ENCODE measurements at regions of chr7 and their contacts with region 1.

Region 1: DNA sequence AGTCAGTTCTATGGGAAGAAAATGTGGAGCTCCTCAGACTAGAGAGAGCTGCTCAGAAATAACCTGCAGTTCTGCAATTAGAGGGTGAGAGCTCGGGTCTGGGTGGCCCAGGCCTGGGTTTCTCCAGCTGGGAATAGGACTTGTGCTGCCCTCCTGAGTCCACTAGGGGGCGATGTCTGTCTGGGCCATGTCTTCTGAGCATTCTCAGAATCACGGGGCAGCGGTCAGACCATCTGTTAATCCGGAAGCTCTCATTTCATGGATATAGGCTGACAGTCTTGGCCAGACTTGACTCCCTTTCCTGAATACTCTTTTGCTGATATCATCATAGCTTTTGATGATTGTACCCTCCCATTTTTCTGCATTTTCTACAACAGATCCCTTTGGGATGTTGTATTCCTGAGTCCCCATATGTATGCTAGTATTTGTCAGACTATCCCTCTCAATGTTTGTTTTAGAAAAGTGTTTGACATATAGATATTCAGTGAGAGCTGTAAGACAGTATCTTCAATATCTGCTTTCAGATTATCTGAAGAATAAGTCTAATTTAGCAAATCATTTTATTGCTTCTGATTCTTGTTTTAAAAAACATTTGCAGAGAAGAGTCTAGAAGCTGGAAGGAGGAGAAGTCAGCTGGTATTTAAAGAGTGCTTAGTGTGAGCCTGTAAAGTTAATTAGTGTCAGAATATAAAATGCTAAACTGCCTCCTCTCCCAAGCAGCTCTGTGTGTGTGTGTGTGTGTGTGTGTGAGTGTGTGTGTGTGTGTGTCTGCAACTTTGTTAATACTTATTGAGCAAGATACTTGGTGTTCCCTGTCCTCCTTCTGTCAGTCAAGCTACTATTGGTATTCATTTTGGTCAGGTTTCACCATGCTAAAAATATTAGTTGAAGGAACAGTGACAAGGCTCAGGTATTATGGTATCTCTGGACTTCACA is 38.0 kb downstream of the STARD3NL start:
- DNase-seq: peak; percentile 59 to 90 (median 64)
- ATAC-seq: peak; percentile 92
- H3K4me3 ChIP-seq: no peak overlapping the region
- H3K4me3 Mint-ChIP-seq: no peak overlapping the region
- H3K27ac ChIP-seq: peak overlapping the region in 1 of 2 donors; percentile 42
- H3K27ac Mint-ChIP-seq: peak overlapping the region; percentile 54
- H3K4me1 ChIP-seq: peaks cover 30% of the 10 kb centered on the region
- H3K4me1 Mint-ChIP-seq: peaks cover 25% of the 10 kb centered on the region
- H3K27me3 ChIP-seq: no peaks in the 10 kb centered on the region
- H3K27me3 Mint-ChIP-seq: no peaks in the 10 kb centered on the region
- CTCF ChIP-seq: peak; percentile 95

Region 2: GRCh38 chr7:38186593-38187314 is 29.2 kb before region 1 on chr7:
- CTCF ChIA-PET with region 1: interaction called, 13 read pairs
- POLR2A ChIA-PET with region 1: no interaction called
- intact Hi-C with region 1: no loop called
- DNase-seq: no peak
- ATAC-seq: no peak
- H3K4me3 ChIP-seq: no peak overlapping the region
- H3K4me3 Mint-ChIP-seq: no peak overlapping the region
- H3K27ac ChIP-seq: no peak overlapping the region
- H3K27ac Mint-ChIP-seq: no peak overlapping the region
- H3K4me1 ChIP-seq: no peaks in the 10 kb centered on the region
- H3K4me1 Mint-ChIP-seq: peaks cover 22% of the 10 kb centered on the region
- H3K27me3 ChIP-seq: no peaks in the 10 kb centered on the region
- H3K27me3 Mint-ChIP-seq: no peaks in the 10 kb centered on the region
- CTCF ChIP-seq: no peak

Region 3: DNA sequence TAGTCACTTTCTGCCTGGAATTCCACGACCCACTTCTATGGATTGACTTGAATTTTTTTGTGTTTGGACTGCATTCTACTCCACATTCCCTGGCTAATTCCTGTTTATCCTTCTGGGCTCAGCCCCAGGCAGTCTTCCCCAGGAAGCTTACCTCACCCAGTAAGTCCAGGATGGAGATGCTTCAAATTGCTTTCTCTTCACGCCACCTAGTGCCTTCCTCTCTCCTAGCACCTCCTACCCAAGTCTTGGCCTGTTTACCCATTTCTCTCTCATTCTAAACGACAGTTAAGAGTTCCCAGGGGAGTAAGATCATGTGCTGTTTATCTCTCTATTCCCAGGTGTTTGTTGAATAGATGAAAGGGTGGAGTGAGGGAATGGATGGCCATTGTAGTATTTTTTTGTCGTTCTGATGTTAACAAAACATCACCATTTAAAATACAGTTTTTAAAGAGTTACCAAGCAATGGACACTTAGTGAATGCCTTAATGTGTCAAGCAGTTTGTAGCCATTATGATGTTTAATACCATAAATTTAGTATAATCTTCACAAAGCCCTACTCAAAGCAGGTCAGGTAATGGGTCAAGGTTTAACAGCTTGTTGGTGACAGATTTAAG is 102.9 kb after region 1 on chr7:
- CTCF ChIA-PET with region 1: interaction called, 6 read pairs
- POLR2A ChIA-PET with region 1: no interaction called
- intact Hi-C with region 1: loop called (anchors 5 kb)
- DNase-seq: peak in 4 of 14 experiments; percentile 36 to 59 (median 56)
- ATAC-seq: peak; percentile 56
- H3K4me3 ChIP-seq: peak overlapping the region; percentile 7
- H3K4me3 Mint-ChIP-seq: peak overlapping the region; percentile 62
- H3K27ac ChIP-seq: peak overlapping the region; percentile 15 to 21
- H3K27ac Mint-ChIP-seq: peak overlapping the region; percentile 72
- H3K4me1 ChIP-seq: peaks cover 19% of the 10 kb centered on the region
- H3K4me1 Mint-ChIP-seq: peaks cover 29% of the 10 kb centered on the region
- H3K27me3 ChIP-seq: no peaks in the 10 kb centered on the region
- H3K27me3 Mint-ChIP-seq: no peaks in the 10 kb centered on the region
- CTCF ChIP-seq: peak; percentile 43

Region 4: GRCh38 chr7:38351601-38352000 is 135.6 kb after region 1 on chr7:
- CTCF ChIA-PET with region 1: interaction called, 10 read pairs
- POLR2A ChIA-PET with region 1: no interaction called
- intact Hi-C with region 1: no loop called
- DNase-seq: no peak
- ATAC-seq: no peak
- H3K4me3 ChIP-seq: peak overlapping the region; percentile 34
- H3K4me3 Mint-ChIP-seq: peak overlapping the region; percentile 86
- H3K27ac ChIP-seq: no peak overlapping the region
- H3K27ac Mint-ChIP-seq: peak overlapping the region; percentile 94
- H3K4me1 ChIP-seq: peaks cover 22% of the 10 kb centered on the region
- H3K4me1 Mint-ChIP-seq: peaks cover 35% of the 10 kb centered on the region
- H3K27me3 ChIP-seq: no peaks in the 10 kb centered on the region
- H3K27me3 Mint-ChIP-seq: no peaks in the 10 kb centered on the region
- CTCF ChIP-seq: no peak

Region 5: GRCh38 chr7:39667341-39667923 is 1451.4 kb after region 1 on chr7:
- CTCF ChIA-PET with region 1: no interaction called
- POLR2A ChIA-PET with region 1: no interaction called
- intact Hi-C with region 1: no loop called
- DNase-seq: no peak
- ATAC-seq: no peak
- H3K4me3 ChIP-seq: no peak overlapping the region
- H3K4me3 Mint-ChIP-seq: no peak overlapping the region
- H3K27ac ChIP-seq: no peak overlapping the region
- H3K27ac Mint-ChIP-seq: no peak overlapping the region
- H3K4me1 ChIP-seq: no peaks in the 10 kb centered on the region
- H3K4me1 Mint-ChIP-seq: peaks cover 68% of the 10 kb centered on the region
- H3K27me3 ChIP-seq: no peaks in the 10 kb centered on the region
- H3K27me3 Mint-ChIP-seq: no peaks in the 10 kb centered on the region
- CTCF ChIP-seq: no peak